ENCODE measurements at regions of chr17 and their contacts with region 1.

Region 1: DNA sequence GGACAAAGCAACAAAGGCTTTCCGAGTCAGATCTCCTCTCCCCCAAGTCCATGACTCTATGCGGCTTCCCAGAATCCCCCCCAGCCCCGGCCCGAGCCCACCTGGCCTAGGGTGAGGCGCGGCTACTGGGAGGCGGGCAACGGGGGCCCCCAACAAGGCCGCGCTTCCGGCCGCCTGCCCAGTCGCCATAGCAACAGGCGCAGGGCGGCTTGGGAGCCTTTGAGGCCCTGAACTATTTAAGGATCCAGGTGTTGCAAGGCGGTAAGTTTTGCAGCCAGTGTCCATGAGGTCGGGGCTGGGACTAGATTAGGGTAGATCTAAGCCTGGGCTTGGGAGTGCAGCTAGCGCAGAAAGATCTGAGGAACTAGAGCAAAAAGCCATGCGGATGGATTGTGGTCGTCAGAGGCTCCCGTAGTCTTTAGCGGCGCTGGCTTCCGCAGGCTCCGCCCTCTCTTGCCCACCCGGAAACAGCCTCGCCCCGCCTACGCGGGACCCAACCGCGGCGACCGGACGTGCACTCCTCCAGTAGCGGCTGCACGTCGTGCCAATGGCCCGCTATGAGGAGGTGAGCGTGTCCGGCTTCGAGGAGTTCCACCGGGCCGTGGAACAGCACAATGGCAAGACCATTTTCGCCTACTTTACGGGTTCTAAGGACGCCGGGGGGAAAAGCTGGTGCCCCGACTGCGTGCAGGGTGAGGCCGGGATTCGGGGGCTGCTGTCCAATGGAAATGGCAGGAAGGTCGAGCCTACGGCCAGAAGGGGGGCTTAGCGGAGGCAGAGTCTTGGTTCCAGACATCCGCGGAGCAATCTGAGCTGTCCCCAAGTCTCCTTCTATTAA is at the starts of genes KIAA0753 and TXNDC17:
- DNase-seq: peak; percentile 74 to 94
- H3K4me3 ChIP-seq: peak within 1 kb of the TSS; percentile 81
- H3K27ac ChIP-seq: peak within 1 kb of the TSS; percentile 71
- H3K4me1 ChIP-seq: peaks cover 31% of the 10 kb centered on the region
- H3K27me3 ChIP-seq: no peaks in the 10 kb centered on the region
- CTCF ChIP-seq: no peak
- total RNA-seq, gene KIAA0753: 34.1 and 47.0 TPM in 2 replicates
- total RNA-seq, gene TXNDC17: 103 and 114 TPM in 2 replicates

Region 2: DNA sequence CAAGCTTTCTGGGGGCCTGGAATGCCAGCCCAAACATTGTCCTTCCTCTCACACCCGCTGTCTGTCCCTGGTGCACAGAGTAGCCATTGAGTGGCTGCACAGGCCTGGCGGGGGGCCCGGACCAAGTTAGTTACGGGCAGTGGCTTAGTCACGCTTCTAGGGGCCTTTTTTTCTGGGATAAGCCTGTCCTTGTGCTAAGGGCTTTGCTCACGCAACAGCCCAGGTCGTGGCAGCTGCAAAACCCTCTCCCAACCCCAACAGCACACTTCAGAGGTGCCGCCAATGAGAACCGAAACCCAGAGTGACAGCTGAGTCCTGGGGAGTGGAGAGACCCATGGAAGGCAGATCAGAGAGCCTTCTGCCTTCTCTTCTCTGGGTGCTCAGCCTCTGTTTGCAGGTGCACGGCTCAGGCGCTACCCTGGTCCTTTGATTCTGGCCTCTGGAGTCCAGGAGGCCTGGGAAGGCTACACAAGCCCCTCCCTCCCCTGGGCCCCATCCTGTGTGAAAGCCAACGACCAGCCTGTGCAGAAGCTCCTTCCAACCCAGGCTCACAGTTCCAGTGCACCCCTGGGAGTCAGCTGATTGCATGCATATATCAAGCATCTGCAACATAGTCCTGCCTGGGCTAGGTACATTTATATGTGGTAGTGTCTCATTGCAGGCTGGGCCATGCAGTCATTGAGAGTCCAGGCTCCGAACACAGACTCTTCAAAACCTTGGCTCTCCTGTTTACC is 561.4 kb before region 1 on chr17:
- CTCF ChIA-PET with region 1: no interaction called
- POLR2A ChIA-PET with region 1: no interaction called
- intact Hi-C with region 1: no loop called
- DNase-seq: no peak
- H3K4me3 ChIP-seq: no peak overlapping the region
- H3K27ac ChIP-seq: no peak overlapping the region
- H3K4me1 ChIP-seq: no peaks in the 10 kb centered on the region
- H3K27me3 ChIP-seq: peaks cover 98% of the 10 kb centered on the region
- CTCF ChIP-seq: no peak

Region 3: DNA sequence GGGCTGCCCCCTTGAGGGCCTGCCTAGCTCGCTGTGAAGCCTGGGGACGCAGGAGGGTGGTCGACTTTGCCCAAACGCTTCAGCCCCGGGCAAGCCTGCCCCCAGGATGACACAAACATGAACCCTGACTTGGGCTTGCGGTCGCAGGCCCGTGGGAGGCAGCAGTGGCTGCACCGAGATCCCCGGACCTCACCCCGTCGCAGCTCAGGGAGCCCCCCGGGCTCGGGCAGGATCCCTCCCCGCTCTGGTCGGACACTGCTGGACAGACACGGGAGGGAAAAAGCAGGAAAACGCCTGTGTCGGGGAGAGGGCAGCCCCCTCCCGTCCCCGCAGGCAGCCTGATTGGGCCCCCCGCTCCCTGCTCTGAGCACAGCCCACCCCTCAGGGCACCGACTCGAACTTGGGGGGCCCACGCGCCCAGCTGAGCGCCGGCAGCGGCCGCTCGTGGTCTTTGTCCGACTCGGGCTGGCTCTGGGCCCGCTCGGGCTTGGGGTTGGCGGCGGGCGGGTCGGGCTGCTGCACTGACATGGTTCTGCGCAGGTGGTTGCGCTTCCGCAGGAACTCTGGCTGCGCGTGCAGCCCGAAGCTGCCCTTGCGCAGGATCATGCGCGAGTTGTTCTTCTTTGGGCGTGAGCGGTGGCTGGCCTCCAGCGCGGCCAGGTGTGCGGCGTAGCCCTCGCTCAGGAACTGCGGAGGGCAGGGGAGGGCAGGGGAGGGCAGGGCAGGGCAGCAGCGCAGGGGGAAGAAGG is 185.6 kb before region 1 on chr17:
- CTCF ChIA-PET with region 1: no interaction called
- POLR2A ChIA-PET with region 1: no interaction called
- intact Hi-C with region 1: loop called (anchors 5 kb)
- DNase-seq: no peak
- H3K4me3 ChIP-seq: no peak overlapping the region
- H3K27ac ChIP-seq: no peak overlapping the region
- H3K4me1 ChIP-seq: peaks cover 12% of the 10 kb centered on the region
- H3K27me3 ChIP-seq: no peaks in the 10 kb centered on the region
- CTCF ChIP-seq: no peak

Measured in PC-9 (cell line).